Activated CD4-positive, alpha-beta T cell treated with anti-CD3 and anti-CD28 coated beads, Interleukin-2, amount 10 ng/mL, durations not matched to agents 24 days and 14 days (primary cell): ENCODE measurements at regions of chr13 and their contacts with region 1.

Region 1: DNA sequence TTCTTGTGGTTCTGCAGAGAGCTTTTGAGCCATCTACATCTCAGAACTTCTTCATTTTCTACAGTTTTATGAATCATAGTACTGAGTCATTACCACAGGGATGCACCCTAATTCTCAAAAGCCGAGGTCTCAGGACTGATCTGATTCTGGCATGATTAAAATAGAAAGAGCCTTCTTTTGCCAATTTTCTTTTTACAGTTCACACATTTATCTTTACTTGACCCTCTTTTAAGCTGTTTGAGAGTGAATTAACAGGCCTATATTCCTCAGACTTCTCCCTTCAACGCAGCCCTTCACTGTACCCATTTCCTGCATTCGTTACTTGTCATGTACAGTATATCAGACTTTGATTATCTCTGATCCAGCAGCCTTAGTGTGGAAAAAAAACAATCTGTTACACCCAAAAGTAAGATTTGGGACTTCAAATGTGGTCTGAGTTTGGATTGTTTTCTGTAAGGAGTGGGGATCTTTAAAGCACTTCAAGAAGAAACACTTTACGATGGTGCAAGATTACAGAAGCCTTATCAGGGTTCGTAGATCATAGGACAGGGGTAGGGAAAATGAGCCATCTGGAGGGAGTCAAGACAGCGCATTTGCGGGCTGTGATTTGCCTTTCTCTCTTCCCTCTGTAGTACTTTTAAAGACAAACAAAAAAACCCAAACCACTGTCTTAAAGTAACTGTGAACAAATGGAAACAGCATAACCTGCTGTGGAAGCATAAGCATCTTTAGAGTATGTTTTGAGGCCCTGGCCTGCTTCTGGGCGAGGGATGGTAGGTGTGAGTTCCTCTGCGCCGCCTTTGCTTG is 15.3 kb upstream of the GPR183 start:
- DNase-seq: peak; percentile 81
- H3K4me3 Mint-ChIP-seq: peak overlapping the region; percentile 63
- H3K27ac Mint-ChIP-seq: peak overlapping the region; percentile 98
- H3K4me1 Mint-ChIP-seq: peaks cover 59% of the 10 kb centered on the region
- H3K27me3 Mint-ChIP-seq: no peaks in the 10 kb centered on the region

Region 2: DNA sequence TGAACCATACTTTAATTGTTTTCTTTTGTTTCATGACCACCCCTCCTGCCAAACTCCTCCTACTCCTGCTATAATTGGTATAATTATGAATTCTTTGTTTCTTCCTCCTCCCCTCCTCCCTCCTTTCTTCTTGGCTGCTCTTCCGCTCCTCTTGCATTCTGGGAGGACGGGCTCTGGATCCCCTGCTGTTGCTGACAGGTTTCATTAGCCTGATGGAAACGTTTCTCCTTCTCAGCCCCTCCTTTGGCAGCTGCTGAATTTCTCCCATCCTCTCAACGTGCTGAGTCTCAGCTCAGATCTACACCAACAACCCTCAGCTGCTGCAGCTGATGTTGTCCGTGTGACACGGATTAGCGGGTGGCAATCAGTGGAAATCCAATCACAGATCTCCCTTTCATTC is 219.0 kb before region 1 on chr13:
- intact Hi-C with region 1: no loop called
- DNase-seq: no peak
- H3K4me3 Mint-ChIP-seq: no peak overlapping the region
- H3K27ac Mint-ChIP-seq: no peak overlapping the region
- H3K4me1 Mint-ChIP-seq: peaks cover 2% of the 10 kb centered on the region
- H3K27me3 Mint-ChIP-seq: peaks cover 17% of the 10 kb centered on the region

Region 3: GRCh38 chr13:99258210-99258860 is 64.2 kb before region 1 on chr13 and contains the start of gene GPR18:
- intact Hi-C with region 1: loop called (anchors 2 kb)
- DNase-seq: peak; percentile 80
- H3K4me3 Mint-ChIP-seq: peak within 1 kb of the TSS; percentile 92
- H3K27ac Mint-ChIP-seq: peak within 1 kb of the TSS; percentile 96
- H3K4me1 Mint-ChIP-seq: peaks cover 51% of the 10 kb centered on the region
- H3K27me3 Mint-ChIP-seq: no peaks in the 10 kb centered on the region
- total RNA-seq, gene GPR18: 5.9 and 6.3 TPM in 2 replicates

Region 4: DNA sequence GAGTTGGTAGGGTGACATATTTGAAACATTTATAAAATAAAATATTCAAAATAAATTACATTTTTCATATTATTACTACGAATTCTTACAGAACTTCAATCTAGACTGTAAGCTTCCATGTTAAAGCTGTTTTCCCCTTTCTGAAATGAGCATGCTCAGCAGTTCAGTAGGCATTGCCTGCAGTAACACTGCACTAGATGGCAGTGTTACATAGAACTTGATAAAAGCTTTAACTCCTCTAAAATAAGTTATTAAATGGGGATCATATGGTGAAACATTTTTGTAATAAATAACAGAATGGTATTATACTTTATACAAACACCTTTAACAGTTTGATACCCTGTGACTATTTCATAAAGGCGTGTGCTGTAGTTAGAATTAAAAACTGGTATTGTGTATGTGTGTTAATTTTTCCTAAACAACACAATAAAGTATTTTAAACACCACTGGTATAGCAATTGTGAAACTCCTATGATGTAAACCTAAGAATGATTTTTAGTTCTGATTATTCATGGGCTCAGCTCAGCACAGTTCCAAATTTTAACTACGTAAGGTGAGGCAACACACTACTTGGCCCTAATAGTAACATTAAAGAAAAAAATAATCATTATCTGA is 52.8 kb before region 1 on chr13:
- intact Hi-C with region 1: loop called (anchors 1 kb)
- DNase-seq: peak; percentile 77
- H3K4me3 Mint-ChIP-seq: no peak overlapping the region
- H3K27ac Mint-ChIP-seq: no peak overlapping the region
- H3K4me1 Mint-ChIP-seq: peaks cover 44% of the 10 kb centered on the region
- H3K27me3 Mint-ChIP-seq: no peaks in the 10 kb centered on the region

Region 5: GRCh38 chr13:99288089-99288488 is 34.4 kb before region 1 on chr13:
- intact Hi-C with region 1: loop called (anchors 2 kb)
- DNase-seq: no peak
- H3K4me3 Mint-ChIP-seq: peak overlapping the region; percentile 55
- H3K27ac Mint-ChIP-seq: peak overlapping the region; percentile 86
- H3K4me1 Mint-ChIP-seq: peaks cover 59% of the 10 kb centered on the region
- H3K27me3 Mint-ChIP-seq: no peaks in the 10 kb centered on the region

Region 6: GRCh38 chr13:99296398-99296797 is 26.1 kb before region 1 on chr13:
- intact Hi-C with region 1: loop called (anchors 1 kb)
- DNase-seq: no peak
- H3K4me3 Mint-ChIP-seq: peak overlapping the region; percentile 68
- H3K27ac Mint-ChIP-seq: peak overlapping the region; percentile 79
- H3K4me1 Mint-ChIP-seq: peaks cover 58% of the 10 kb centered on the region
- H3K27me3 Mint-ChIP-seq: no peaks in the 10 kb centered on the region

Region 7: DNA sequence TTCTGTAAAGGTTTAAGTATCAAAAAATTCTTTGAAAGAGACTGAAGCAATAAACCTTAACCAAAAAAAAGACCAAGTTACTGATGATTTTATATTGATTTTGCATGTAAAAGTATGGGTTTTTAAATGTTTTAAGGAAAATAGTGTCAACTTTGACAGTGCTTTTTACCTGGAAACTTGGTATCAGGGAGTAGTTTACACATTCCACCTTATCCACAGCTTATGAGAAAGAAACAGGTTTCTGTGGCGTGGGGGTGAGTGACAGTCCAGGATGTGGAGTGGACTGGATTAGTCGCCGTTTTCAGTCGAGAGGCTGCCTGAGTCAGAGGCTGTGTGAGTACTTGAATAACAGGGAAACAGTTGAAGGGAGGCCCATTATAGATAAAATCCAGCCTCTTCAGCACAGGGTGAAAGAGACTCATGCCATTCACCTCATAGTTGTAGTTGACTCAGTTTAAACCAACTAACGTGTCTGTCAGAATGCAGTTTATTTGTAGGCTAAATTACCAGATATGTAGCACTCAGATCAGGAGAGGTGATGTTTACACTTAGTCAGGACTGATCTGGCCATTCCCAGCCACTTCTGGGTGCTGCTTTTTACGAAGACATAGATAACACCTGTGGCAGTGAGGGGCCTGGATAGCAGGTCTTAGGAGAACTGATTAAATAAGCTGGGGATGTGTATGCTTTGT is 14.7 kb before region 1 on chr13:
- intact Hi-C with region 1: loop called (anchors 1 kb)
- DNase-seq: peak; percentile 87
- H3K4me3 Mint-ChIP-seq: peak overlapping the region; percentile 84
- H3K27ac Mint-ChIP-seq: peak overlapping the region; percentile 88
- H3K4me1 Mint-ChIP-seq: peaks cover 73% of the 10 kb centered on the region
- H3K27me3 Mint-ChIP-seq: no peaks in the 10 kb centered on the region

Region 8: GRCh38 chr13:99351772-99352171 is 29.3 kb after region 1 on chr13:
- intact Hi-C with region 1: no loop called
- DNase-seq: peak; percentile 78
- H3K4me3 Mint-ChIP-seq: peak overlapping the region; percentile 13
- H3K27ac Mint-ChIP-seq: peak overlapping the region; percentile 52
- H3K4me1 Mint-ChIP-seq: peaks cover 65% of the 10 kb centered on the region
- H3K27me3 Mint-ChIP-seq: no peaks in the 10 kb centered on the region

Region 9: DNA sequence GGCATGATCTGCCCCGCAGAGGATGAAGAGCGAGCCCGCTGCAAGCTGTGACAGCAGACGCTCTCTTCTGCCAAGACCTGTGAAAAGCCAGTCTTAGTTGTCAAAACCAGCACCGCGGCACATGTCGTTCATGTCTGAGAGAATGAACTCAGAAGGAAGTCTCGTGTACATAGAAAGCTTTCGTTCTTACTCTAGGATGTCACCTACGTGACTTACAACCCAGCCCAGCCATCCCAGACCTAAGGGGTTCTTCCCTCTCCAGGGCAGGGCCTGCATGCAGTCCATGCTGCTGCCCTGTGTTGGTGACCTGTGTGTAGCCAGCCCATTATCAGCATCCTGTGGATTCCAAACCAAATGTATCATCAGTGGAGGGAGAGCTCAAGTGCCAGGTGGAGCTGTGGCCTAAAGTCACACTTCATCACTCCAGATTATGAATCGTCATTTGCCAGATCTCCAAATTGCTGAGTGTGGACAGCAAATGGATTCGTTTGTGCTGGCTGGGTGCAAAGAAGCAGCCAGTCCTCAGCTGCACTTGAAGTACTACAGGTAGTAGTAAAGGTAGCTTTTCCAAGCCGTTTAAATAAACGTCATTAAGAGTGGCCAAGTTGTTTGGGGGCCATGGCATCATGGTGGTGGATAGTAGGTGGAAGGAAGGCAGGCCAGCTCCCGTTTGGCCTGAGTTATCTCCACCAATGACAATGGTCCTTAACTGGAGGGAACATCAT is 58.6 kb after region 1 on chr13:
- intact Hi-C with region 1: loop called (anchors 1 kb)
- DNase-seq: peak; percentile 88
- H3K4me3 Mint-ChIP-seq: peak overlapping the region; percentile 56
- H3K27ac Mint-ChIP-seq: peak overlapping the region; percentile 88
- H3K4me1 Mint-ChIP-seq: peaks cover 65% of the 10 kb centered on the region
- H3K27me3 Mint-ChIP-seq: no peaks in the 10 kb centered on the region